B cell (primary cell): ENCODE measurements at regions of chr11 and their contacts with region 1.

Region 1: GRCh38 chr11:84558085-84558905 is 1068.8 kb downstream of the DLG2 start:
- DNase-seq: peak; percentile 48
- ATAC-seq: peak; percentile 54
- H3K4me3 ChIP-seq: no peak overlapping the region
- H3K4me3 Mint-ChIP-seq: no peak overlapping the region
- H3K27ac ChIP-seq: no peak overlapping the region
- H3K27ac Mint-ChIP-seq: no peak overlapping the region
- H3K4me1 ChIP-seq: no peaks in the 10 kb centered on the region
- H3K4me1 Mint-ChIP-seq: peaks cover 3% of the 10 kb centered on the region
- H3K27me3 ChIP-seq: no peaks in the 10 kb centered on the region
- H3K27me3 Mint-ChIP-seq: peaks cover 4% of the 10 kb centered on the region
- CTCF ChIP-seq: peak; percentile 85

Region 2: GRCh38 chr11:84398017-84398626 is 160.2 kb before region 1 on chr11:
- CTCF ChIA-PET with region 1: no interaction called
- POLR2A ChIA-PET with region 1: no interaction called
- intact Hi-C with region 1: no loop called
- DNase-seq: no peak
- ATAC-seq: no peak
- H3K4me3 ChIP-seq: no peak overlapping the region
- H3K4me3 Mint-ChIP-seq: no peak overlapping the region
- H3K27ac ChIP-seq: no peak overlapping the region
- H3K27ac Mint-ChIP-seq: no peak overlapping the region
- H3K4me1 ChIP-seq: no peaks in the 10 kb centered on the region
- H3K4me1 Mint-ChIP-seq: no peaks in the 10 kb centered on the region
- H3K27me3 ChIP-seq: no peaks in the 10 kb centered on the region
- H3K27me3 Mint-ChIP-seq: no peaks in the 10 kb centered on the region
- CTCF ChIP-seq: no peak

Region 3: GRCh38 chr11:84686716-84687115 is 128.4 kb after region 1 on chr11:
- CTCF ChIA-PET with region 1: no interaction called
- POLR2A ChIA-PET with region 1: no interaction called
- intact Hi-C with region 1: no loop called
- DNase-seq: no peak
- ATAC-seq: no peak
- H3K4me3 ChIP-seq: no peak overlapping the region
- H3K4me3 Mint-ChIP-seq: no peak overlapping the region
- H3K27ac ChIP-seq: no peak overlapping the region
- H3K27ac Mint-ChIP-seq: no peak overlapping the region
- H3K4me1 ChIP-seq: no peaks in the 10 kb centered on the region
- H3K4me1 Mint-ChIP-seq: no peaks in the 10 kb centered on the region
- H3K27me3 ChIP-seq: no peaks in the 10 kb centered on the region
- H3K27me3 Mint-ChIP-seq: no peaks in the 10 kb centered on the region
- CTCF ChIP-seq: no peak

Region 4: DNA sequence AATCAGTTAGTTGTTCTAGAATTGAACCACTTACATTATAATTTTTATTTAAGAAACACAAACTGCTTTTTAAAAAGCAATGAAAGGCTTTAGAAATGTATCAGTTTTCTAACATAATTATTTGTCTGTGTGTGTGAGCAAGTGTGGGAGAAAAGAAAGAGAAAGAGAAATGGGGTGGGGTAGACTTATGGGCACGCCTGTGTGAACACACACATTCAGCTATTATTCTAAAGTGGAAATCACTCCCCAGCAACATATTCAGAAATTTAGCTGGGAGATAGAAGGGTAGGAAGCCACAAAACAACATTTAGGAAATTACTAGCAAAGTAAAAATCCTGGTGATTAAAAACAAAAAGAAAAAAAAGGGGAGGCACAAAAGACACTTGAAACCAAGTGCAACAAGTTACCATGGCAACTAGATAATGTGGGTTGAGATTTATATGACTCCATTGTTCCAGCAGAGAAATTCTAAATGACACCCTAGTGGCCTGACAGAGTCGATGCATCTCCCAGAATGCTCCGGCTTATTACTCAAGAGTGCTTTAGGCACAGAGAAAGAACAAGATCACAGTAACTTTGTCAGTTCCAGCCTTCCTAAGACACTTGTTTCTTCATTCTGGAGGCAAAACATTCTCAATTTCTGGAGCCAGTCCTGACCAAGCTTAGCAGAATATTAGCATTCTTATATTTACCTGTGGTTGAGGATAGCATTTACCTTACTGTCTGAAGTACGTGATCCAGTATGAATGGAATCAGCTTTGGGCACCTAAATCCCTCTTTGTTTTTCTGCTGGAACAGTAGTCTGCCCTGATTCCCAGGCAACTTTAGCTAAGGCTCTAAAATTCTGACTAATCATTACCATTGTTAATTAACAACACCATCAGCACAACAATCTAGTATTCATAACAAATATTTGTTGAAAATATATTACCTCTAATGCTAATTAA is 624.4 kb after region 1 on chr11:
- CTCF ChIA-PET with region 1: no interaction called
- POLR2A ChIA-PET with region 1: no interaction called
- intact Hi-C with region 1: loop called (anchors 5 kb)
- DNase-seq: peak; percentile 48
- ATAC-seq: peak; percentile 51
- H3K4me3 ChIP-seq: no peak overlapping the region
- H3K4me3 Mint-ChIP-seq: no peak overlapping the region
- H3K27ac ChIP-seq: no peak overlapping the region
- H3K27ac Mint-ChIP-seq: no peak overlapping the region
- H3K4me1 ChIP-seq: peaks cover 0 to 5% of the 10 kb centered on the region in 2 donors
- H3K4me1 Mint-ChIP-seq: peaks cover 12% of the 10 kb centered on the region
- H3K27me3 ChIP-seq: no peaks in the 10 kb centered on the region
- H3K27me3 Mint-ChIP-seq: no peaks in the 10 kb centered on the region
- CTCF ChIP-seq: peak; percentile 52